ENCODE measurements at regions of chr18 and their contacts with region 1.

Region 1: GRCh38 chr18:49663899-49664890 is 102.3 kb downstream of the LIPG start:
- DNase-seq: no peak

Region 2: DNA sequence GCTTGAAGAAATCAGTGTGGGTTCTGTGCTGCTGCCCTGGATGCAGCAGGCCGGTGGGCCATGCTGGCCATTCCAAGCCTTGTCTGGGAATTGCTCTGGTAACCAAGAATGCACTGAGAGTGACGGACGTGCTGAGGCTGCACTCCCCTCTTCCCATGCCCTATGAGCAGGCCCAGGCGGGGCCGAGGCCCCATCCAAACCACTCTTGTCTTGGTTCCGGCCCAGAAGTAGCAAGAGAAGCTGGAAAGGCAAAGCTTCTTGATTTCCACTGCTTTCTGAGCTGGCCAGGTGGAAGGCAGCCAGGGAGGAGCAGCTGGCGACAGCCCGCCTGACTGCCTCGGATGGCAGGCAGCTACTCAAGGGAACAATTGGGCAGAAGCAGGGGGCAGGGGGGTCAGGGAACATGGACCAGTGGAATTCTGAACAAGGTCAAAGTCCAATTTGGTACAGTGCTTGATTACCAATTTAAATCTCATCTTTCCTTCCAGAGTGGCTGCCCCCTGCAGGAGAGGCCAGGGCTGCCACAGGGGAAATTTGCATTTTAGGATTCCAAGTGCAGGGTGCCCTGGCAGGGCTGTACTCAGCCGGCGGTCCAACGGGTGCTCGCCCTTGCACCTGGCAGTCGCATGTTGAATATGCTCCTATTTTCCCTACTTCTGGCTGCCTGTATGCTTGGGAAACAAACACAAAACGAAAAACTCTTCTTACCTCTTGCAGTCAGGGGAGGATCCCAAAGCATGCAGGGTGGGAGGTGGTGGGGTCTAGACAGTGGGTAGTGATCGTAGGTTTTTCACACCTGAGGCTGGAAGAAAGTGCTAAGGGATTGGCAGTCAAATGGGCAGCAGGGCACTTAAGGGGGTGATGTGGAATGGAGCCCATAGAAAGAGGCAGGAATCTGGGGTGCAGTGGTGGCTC is 35.1 kb before region 1 on chr18:
- intact Hi-C with region 1: loop called in 1 of 2 experiments (anchors 5 kb)
- DNase-seq: peak; percentile 89